Gastrocnemius medialis (tissue), 4 donors: ENCODE measurements at regions of chr19 and their contacts with region 1.

Region 1: DNA sequence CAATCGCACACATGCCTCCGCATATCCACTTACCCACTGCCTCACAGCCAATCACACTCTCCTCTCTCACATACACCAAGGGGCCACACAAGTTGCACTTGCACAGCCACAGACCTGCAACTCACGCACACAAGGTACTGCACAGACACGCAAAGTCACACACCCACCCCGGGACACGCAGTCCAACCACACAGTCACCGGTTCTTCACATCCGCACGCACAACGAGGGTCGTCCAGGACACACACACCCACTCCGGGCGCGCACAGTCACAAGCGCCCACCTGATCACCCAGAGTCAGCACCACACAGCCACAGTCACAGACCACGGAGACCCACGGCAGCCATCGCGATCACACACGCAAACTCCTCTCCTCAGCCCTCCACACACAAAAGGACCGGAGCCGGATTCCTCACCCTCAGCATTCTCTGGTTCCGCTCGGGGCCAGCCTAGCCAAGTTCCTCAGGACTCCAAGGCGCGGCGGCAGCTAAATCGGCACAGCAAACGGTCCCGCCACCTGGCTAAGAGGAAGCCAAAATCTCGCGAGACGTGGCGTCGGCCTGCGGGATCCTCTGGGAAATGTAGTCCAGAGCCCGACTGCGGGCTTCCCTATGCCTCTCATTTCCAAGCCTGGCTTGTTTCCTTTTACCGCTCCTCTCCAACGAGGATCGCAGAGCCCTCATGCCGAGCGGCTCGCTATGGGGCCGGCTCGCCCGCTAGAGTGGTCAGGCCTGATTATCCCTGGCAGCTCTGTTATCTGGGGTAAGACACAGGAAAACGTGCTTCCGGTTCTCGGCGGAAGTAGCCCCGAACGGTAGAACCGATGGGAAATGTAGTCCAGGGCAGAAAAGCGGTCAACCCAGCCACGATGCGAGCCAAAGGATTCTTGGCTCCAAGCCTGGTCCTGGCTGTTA is at the start of gene ZNF850:
- DNase-seq: peak; percentile 82 to 83
- ATAC-seq: peak; percentile 97 to 98
- H3K4me3 ChIP-seq: peak within 1 kb of the TSS; percentile 71 to 98 (median 86)
- H3K27ac ChIP-seq: peak within 1 kb of the TSS; percentile 74 to 89 (median 84)
- H3K4me1 ChIP-seq: peaks cover 11 to 20% of the 10 kb centered on the region in 2 donors
- H3K27me3 ChIP-seq: peaks cover 0 to 4% (median 0%) of the 10 kb centered on the region in 3 donors
- CTCF ChIP-seq: no peak
- POLR2A ChIP-seq: peak in 1 of 2 donors; percentile 30
- total RNA-seq, gene ZNF850: 0.24 to 0.55 (median 0.42) TPM

Region 2: DNA sequence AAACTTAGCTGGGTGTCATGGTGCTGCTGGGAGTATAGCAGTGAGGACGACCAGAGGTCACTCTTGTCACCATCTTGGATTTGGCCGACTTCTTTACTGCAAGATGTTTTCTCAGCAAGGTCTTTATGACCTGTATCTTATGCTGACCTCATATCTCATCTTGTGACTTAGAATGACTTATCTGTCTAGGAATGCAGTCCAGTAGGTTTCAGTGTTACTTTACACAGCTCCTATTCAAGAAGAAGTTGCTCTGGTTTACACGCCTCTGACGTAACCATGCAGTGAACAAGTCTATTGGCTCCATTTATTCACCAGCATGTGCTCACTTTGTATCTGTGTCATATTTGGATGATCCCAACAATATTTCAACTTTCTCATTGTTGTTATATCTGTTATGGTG is 26.7 kb before region 1 on chr19:
- in situ Hi-C with region 1: no loop called
- intact Hi-C with region 1: no loop called
- DNase-seq: no peak
- ATAC-seq: no peak
- H3K4me3 ChIP-seq: peak overlapping the region in 1 of 4 donors; percentile 19
- H3K27ac ChIP-seq: no peak overlapping the region
- H3K4me1 ChIP-seq: no peaks in the 10 kb centered on the region
- H3K27me3 ChIP-seq: no peaks in the 10 kb centered on the region
- CTCF ChIP-seq: no peak
- POLR2A ChIP-seq: no peak

Region 3: DNA sequence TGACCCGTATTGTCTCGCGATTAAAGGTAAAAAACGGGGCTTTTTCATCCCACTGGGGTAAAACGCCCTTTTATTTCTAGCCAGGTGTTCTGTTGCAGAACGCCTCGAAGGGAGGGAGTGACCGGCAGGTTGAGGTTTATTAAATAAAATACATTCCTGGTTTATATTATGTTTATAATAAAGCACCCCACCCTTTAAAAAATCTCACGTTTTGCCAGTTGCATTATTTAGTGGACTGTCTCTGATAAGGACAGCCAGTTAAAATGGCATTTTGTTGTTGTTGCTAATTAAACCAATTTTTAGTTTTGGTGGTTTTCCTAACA is 25.2 kb after region 1 on chr19:
- in situ Hi-C with region 1: no loop called
- intact Hi-C with region 1: loop called (anchors 1 kb)
- DNase-seq: no peak
- ATAC-seq: peak in 1 of 2 donors; percentile 12
- H3K4me3 ChIP-seq: peak overlapping the region; percentile 53 to 79 (median 70)
- H3K27ac ChIP-seq: peak overlapping the region; percentile 32 to 65 (median 54)
- H3K4me1 ChIP-seq: peaks cover 0 to 3% of the 10 kb centered on the region in 2 donors
- H3K27me3 ChIP-seq: no peaks in the 10 kb centered on the region
- CTCF ChIP-seq: no peak
- POLR2A ChIP-seq: no peak

Region 4: DNA sequence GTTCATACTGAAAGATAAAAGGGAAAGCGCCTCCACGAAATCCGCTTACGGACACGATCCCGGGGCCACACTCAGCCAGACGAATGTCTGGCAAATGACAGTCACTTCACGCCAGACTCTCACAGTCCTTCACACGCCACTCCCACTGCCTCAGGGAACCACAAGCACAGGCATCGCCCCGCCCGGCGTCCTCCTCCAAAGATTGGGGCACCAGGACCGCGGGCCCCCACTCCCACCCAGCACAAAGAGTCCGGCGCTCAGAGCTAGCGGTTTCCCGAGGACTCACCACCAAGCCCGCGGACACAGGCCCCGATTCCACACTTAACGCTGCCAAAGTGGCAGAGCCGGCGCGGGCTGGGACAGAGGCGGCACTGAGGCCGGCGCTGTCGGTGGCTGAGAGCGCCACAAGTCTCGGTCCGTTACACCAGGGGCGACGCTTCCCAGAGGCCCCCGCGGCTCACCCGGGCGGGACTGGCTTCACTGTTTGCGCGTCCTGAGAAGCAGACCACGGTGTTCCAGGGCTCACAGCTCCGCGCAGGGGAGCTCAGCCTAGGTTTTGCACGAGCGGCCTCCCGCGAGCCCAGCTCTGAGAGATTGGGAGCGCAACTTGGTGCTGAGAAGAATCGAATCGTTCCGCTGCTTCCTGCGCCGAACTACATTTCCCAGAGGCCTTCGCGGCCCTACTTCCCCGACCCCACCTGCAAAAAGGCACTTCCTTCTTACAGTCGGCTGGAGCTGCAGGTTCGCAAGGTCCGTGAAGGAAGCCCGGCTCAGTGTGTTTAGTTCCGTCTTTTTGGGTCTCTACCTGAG is 694.4 kb after region 1 on chr19 and contains the start of gene ZNF569:
- in situ Hi-C with region 1: no loop called
- intact Hi-C with region 1: no loop called
- DNase-seq: peak; percentile 86 to 89
- ATAC-seq: peak; percentile 91 to 92
- H3K4me3 ChIP-seq: peak within 1 kb of the TSS; percentile 87 to 90 (median 88)
- H3K27ac ChIP-seq: peak within 1 kb of the TSS; percentile 84 to 92 (median 88)
- H3K4me1 ChIP-seq: peaks cover 14 to 16% of the 10 kb centered on the region in 2 donors
- H3K27me3 ChIP-seq: no peaks in the 10 kb centered on the region
- CTCF ChIP-seq: peak in 1 of 5 experiments; percentile 16
- POLR2A ChIP-seq: peak; percentile 20 to 28
- total RNA-seq, gene ZNF569: 3.4 to 9.2 (median 4.4) TPM